OCI-LY7 (cell line): ENCODE measurements at regions of chr4 and their contacts with region 1.

Region 1: GRCh38 chr4:184310171-184310567 is 92.5 kb upstream of the ENPP6 start:
- DNase-seq: peak; percentile 73
- H3K4me3 ChIP-seq: no peak overlapping the region
- H3K27ac ChIP-seq: no peak overlapping the region
- H3K4me1 ChIP-seq: peaks cover 56% of the 10 kb centered on the region
- CTCF ChIP-seq: peak; percentile 76

Region 2: GRCh38 chr4:184215709-184216328 is 94.3 kb before region 1 on chr4:
- CTCF ChIA-PET with region 1: no interaction called
- POLR2A ChIA-PET with region 1: no interaction called
- intact Hi-C with region 1: no loop called
- DNase-seq: no peak
- H3K4me3 ChIP-seq: no peak overlapping the region
- H3K27ac ChIP-seq: no peak overlapping the region
- H3K4me1 ChIP-seq: no peaks in the 10 kb centered on the region
- CTCF ChIP-seq: no peak

Region 3: DNA sequence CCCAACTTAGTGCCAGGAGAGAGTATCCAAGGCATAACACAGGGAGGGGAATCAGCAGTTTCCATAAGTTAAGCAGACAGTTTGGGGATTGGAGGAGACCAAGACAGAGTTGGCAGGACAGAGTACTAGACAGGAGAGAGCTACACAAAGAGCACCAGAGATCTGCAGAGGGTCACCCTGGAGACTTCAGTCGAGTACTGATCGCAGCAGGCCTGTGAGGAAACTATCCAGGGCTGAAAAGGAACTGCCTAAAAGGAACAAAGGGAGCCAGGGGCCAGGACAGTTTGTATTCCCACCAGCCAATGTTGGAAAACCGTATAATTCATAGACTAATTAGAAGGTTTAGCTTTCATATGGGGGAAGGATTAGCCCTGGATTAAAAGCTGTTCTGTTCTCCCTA is 11.9 kb before region 1 on chr4:
- CTCF ChIA-PET with region 1: no interaction called
- POLR2A ChIA-PET with region 1: interaction called, 34 read pairs
- intact Hi-C with region 1: no loop called
- DNase-seq: no peak
- H3K4me3 ChIP-seq: no peak overlapping the region
- H3K27ac ChIP-seq: no peak overlapping the region
- H3K4me1 ChIP-seq: peaks cover 5% of the 10 kb centered on the region
- CTCF ChIP-seq: no peak